ENCODE measurements at regions of chr2 and their contacts with region 1.

Region 1: DNA sequence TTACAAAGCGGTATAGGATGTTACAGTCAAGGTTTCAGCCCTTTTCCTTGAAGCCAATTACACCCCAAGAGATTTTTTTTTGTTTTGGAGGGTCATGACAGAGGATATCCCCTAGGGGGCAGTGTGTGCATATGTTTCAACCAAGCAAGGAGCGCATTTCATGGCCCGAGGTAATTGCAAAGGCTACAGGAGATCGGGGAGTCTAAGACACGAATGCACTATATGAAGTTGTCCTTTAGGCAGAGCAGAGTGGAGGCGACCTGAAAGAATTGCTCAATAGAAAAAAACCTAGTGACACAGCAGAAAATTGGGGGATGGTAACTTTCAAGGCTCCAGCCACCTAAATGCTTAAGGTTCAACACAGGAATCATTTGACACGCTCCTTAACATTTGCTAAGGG is 219.8 kb upstream of the PARD3B start:
- DNase-seq: peak; percentile 61 to 76 (median 72)
- ATAC-seq: peak; percentile 82
- H3K4me3 ChIP-seq: no peak overlapping the region
- H3K27ac ChIP-seq: no peak overlapping the region
- H3K4me1 ChIP-seq: no peaks in the 10 kb centered on the region
- H3K27me3 ChIP-seq: no peaks in the 10 kb centered on the region
- CTCF ChIP-seq: peak; percentile 73 to 94 (median 91)
- POLR2A ChIP-seq: no peak

Region 2: DNA sequence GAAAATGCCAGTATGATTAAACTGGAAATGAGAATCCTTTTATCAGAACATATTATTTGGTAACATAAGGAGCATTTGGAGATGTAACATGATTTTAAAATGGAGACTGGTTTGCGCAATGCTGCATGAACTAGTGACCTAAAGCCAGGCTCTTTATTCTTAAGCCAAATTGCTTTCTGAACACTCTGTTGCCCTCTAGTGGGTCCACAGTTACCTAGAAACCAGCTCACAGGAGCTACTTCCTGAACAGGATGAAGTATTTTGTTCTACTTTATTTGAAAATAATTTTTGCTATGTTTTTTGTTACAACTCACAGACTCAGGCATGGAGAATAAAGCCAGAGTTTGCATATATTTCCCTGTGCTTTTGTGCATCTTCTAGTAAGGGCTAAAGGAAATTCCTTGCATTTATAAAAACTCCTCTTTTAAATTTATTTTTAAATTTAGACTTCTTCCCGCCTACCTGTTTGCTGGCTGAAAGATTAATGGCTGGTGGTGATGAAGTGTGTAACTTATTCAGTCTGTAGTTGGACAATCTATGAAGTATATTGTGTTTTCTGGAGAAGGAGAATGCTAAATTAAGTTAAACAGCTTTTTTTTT is 366.5 kb after region 1 on chr2:
- intact Hi-C with region 1: loop called (anchors 10 kb)
- DNase-seq: peak; percentile 66 to 85 (median 71)
- ATAC-seq: peak; percentile 93
- H3K4me3 ChIP-seq: no peak overlapping the region
- H3K27ac ChIP-seq: no peak overlapping the region
- H3K4me1 ChIP-seq: no peaks in the 10 kb centered on the region
- H3K27me3 ChIP-seq: no peaks in the 10 kb centered on the region
- CTCF ChIP-seq: peak; percentile 55 to 91 (median 78)
- POLR2A ChIP-seq: no peak

Region 3: GRCh38 chr2:204722207-204722606 is 396.7 kb after region 1 on chr2:
- intact Hi-C with region 1: no loop called
- DNase-seq: no peak
- ATAC-seq: no peak
- H3K4me3 ChIP-seq: no peak overlapping the region
- H3K27ac ChIP-seq: no peak overlapping the region
- H3K4me1 ChIP-seq: no peaks in the 10 kb centered on the region
- H3K27me3 ChIP-seq: no peaks in the 10 kb centered on the region
- CTCF ChIP-seq: no peak
- POLR2A ChIP-seq: no peak

Region 4: GRCh38 chr2:204958371-204958770 is 632.9 kb after region 1 on chr2:
- intact Hi-C with region 1: no loop called
- DNase-seq: no peak
- ATAC-seq: no peak
- H3K4me3 ChIP-seq: no peak overlapping the region
- H3K27ac ChIP-seq: no peak overlapping the region
- H3K4me1 ChIP-seq: no peaks in the 10 kb centered on the region
- H3K27me3 ChIP-seq: no peaks in the 10 kb centered on the region
- CTCF ChIP-seq: no peak
- POLR2A ChIP-seq: no peak

Region 5: GRCh38 chr2:205680067-205680466 is 1354.6 kb after region 1 on chr2:
- intact Hi-C with region 1: loop called (anchors 10 kb)
- DNase-seq: peak; percentile 49 to 62 (median 56)
- ATAC-seq: peak; percentile 50
- H3K4me3 ChIP-seq: no peak overlapping the region
- H3K27ac ChIP-seq: no peak overlapping the region
- H3K4me1 ChIP-seq: peaks cover 23% of the 10 kb centered on the region
- H3K27me3 ChIP-seq: peaks cover 0 to 7% of the 10 kb centered on the region in 2 donors
- CTCF ChIP-seq: peak in 6 of 7 experiments; percentile 40 to 77 (median 60)
- POLR2A ChIP-seq: no peak

Measured in body of pancreas (tissue), 4 donors.